ENCODE measurements at regions of chr21 and their contacts with region 1.

Region 1: DNA sequence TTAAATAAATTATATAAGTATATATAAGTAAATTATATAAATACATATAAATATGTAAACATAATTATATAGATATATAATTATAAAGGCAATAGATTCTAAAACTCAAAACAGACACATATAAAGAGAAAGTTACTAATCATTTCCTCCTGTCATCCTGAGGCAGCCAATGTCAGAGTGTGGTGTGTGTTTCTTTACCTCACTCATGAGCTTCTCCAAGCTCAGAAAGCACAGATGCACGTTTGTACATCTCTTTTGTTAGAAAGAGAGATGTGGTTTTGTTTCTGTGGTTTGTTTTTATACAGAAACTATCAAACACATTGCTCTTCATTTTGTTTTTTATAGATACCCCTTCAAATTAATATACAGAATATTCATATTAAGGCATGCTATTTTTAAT is 594.8 kb downstream of the USP25 start:
- DNase-seq: no peak
- H3K4me3 ChIP-seq: no peak overlapping the region
- H3K27ac ChIP-seq: no peak overlapping the region
- H3K4me1 ChIP-seq: no peaks in the 10 kb centered on the region
- H3K27me3 ChIP-seq: no peaks in the 10 kb centered on the region
- CTCF ChIP-seq: no peak
- POLR2A ChIP-seq: no peak

Region 2: GRCh38 chr21:16084776-16085364 is 239.8 kb before region 1 on chr21:
- intact Hi-C with region 1: loop called (anchors 5 kb)
- DNase-seq: no peak
- H3K4me3 ChIP-seq: no peak overlapping the region
- H3K27ac ChIP-seq: peak overlapping the region in 3 of 4 donors; percentile 30 to 65 (median 52)
- H3K4me1 ChIP-seq: no peaks in the 10 kb centered on the region
- H3K27me3 ChIP-seq: no peaks in the 10 kb centered on the region
- CTCF ChIP-seq: no peak
- POLR2A ChIP-seq: no peak